Activated naive CD4-positive, alpha-beta T cell treated with anti-CD3 and anti-CD28 coated beads for 36 hours (primary cell): ENCODE measurements at regions of chr6 and their contacts with region 1.

Region 1: DNA sequence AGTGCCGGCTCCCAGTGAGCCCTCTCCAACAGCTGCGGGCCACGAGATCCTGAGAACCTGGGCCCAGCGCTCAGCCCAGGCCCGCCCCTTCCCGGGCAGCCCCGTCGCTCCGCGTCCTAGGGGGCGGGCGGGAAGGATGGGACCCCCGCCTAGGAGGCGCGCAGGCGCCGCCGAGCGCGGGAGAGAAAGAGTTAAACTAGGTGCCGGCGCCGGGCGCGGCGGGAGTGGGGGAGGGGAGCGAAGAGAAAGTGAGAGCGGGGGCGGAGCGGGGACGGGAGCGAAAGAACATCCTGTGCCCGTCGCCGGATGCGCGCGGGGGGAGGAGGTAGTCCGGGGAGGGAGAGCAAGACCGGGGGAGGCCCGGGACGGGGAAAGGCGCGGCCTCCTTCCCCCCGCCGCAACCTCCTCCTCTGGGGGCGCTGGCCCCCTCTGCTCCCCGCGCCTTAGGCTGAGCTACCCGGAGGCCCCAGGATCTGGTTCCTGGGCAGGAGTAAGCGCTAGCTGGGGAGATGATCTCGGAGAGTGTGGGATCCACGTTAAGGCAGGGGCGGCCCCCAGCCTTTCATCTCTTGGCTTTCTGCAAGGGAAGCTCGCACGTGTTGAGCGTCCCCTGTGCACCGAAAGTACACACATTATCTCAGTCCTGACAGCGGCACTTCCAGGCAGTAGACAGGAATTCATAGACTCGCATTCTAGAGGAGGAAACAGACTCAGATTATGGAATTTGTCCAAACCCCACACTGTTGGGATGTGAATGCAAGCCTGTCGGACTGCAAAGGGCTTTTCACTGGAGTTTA is 4.9 kb upstream of the ARMC12 start:
- DNase-seq: peak; percentile 98
- H3K4me3 Mint-ChIP-seq: peak overlapping the region; percentile 78
- H3K27ac Mint-ChIP-seq: peak overlapping the region; percentile 87
- H3K4me1 Mint-ChIP-seq: peaks cover 78% of the 10 kb centered on the region
- H3K27me3 Mint-ChIP-seq: no peaks in the 10 kb centered on the region

Region 2: DNA sequence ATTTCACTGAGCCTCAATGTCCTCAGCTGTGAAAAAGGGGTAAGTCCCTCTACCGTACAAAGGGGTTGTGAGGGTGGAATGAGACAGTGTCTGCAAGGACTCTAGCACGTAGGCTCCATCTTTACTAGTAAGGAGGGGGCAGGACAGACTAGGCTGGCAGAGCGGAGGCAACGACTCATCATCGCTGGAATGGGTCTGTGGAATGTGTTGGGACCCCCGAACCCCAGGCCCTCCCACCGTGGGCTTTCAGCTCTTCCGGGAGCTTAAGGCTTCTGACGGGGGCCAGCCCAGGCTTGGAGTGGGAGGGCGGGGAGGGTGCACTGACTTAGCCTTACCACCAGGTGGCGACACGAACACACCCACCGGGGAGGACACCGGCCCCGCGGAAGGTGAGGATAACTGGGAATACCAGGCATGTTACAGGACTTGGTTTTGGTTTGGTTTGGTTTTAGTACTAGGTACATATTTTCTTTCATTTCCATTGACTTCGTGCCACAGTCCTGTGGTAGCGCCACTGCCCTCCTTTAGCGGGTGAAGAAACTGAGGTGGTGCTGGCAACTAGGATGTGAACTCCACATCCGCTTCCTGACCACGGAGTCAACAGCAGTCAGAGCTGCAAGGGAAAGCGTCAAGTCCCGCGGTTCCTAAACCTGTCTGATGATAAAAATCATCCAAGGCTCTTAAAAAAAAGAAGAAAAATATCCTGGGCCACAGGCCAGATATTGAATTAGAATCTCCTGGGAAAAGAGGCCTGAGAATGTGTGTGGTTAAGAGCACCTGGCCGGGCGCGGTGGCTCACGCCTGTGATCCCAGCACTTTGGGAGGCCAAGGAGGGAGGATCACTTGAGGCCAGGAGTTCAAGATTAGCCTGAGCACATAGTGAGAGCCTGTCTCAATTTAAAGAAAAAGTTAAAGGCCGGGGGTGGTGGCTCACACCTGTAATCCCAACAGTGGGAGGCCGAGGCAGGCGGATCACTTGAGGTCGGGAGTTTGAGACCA is 209.0 kb before region 1 on chr6:
- CTCF ChIA-PET with region 1: interaction called, 117 read pairs
- intact Hi-C with region 1: loop called (anchors 1 kb)
- DNase-seq: peak; percentile 87
- H3K4me3 Mint-ChIP-seq: peak overlapping the region; percentile 63
- H3K27ac Mint-ChIP-seq: peak overlapping the region; percentile 61
- H3K4me1 Mint-ChIP-seq: peaks cover 5% of the 10 kb centered on the region
- H3K27me3 Mint-ChIP-seq: no peaks in the 10 kb centered on the region

Region 3: GRCh38 chr6:35569011-35569461 is 162.9 kb before region 1 on chr6:
- CTCF ChIA-PET with region 1: interaction called, 42 read pairs
- intact Hi-C with region 1: loop called (anchors 1 kb)
- DNase-seq: peak; percentile 68
- H3K4me3 Mint-ChIP-seq: no peak overlapping the region
- H3K27ac Mint-ChIP-seq: no peak overlapping the region
- H3K4me1 Mint-ChIP-seq: no peaks in the 10 kb centered on the region
- H3K27me3 Mint-ChIP-seq: no peaks in the 10 kb centered on the region

Region 4: DNA sequence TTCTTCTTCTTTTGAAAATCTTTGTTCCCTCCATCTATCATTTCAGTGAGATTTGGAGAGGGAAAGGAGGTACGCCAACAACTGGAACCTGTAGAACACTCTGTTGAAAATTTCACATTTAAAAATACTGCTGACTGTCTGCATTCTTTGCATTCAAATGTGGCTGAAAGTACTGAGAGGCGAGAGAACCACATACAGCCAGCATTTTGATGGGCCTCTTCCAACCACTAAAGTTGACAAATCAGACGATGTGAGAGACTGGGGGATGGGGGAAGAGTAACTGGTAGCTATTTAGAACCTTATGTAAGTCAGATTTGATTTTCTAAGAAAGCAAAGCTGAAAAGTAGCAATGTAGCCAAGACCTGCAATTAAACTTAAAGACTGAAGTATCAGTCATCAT is 120.7 kb before region 1 on chr6:
- CTCF ChIA-PET with region 1: interaction called, 13 read pairs
- intact Hi-C with region 1: no loop called
- DNase-seq: peak; percentile 65
- H3K4me3 Mint-ChIP-seq: no peak overlapping the region
- H3K27ac Mint-ChIP-seq: peak overlapping the region; percentile 62
- H3K4me1 Mint-ChIP-seq: peaks cover 85% of the 10 kb centered on the region
- H3K27me3 Mint-ChIP-seq: no peaks in the 10 kb centered on the region

Region 5: GRCh38 chr6:35642471-35643161 is 89.3 kb before region 1 on chr6:
- CTCF ChIA-PET with region 1: interaction called, 19 read pairs
- intact Hi-C with region 1: no loop called
- DNase-seq: no peak
- H3K4me3 Mint-ChIP-seq: no peak overlapping the region
- H3K27ac Mint-ChIP-seq: peak overlapping the region; percentile 48
- H3K4me1 Mint-ChIP-seq: peaks cover 74% of the 10 kb centered on the region
- H3K27me3 Mint-ChIP-seq: no peaks in the 10 kb centered on the region

Region 6: GRCh38 chr6:35688581-35689322 is 43.2 kb before region 1 on chr6 and contains the start of gene FKBP5:
- CTCF ChIA-PET with region 1: interaction called, 42 read pairs
- intact Hi-C with region 1: loop called (anchors 1 kb)
- DNase-seq: peak; percentile 92
- H3K4me3 Mint-ChIP-seq: peak within 1 kb of the TSS; percentile 97
- H3K27ac Mint-ChIP-seq: peak within 1 kb of the TSS; percentile 94
- H3K4me1 Mint-ChIP-seq: peaks cover 16% of the 10 kb centered on the region
- H3K27me3 Mint-ChIP-seq: no peaks in the 10 kb centered on the region
- total RNA-seq, gene FKBP5: 202 to 208 TPM

Region 7: DNA sequence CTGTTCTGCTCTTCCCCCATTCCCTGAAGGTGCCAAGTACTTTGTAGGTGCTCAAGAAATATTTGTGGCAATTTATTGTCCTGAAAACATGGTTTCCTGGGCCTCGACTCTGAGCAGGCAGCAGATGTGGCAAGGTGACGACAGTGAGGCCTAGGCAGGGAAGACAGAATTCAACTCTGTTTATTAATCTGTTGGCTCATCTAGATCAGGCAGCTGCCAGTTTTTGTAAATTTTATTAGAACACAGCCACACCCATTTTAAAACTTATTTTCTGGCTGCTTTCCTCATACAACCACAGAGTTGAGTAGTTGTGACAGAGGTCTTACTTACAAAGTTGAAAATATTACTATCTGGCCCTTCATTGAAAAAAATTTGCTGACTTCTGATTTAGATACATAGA is 320.2 kb after region 1 on chr6:
- CTCF ChIA-PET with region 1: no interaction called
- intact Hi-C with region 1: no loop called
- DNase-seq: no peak
- H3K4me3 Mint-ChIP-seq: no peak overlapping the region
- H3K27ac Mint-ChIP-seq: no peak overlapping the region
- H3K4me1 Mint-ChIP-seq: peaks cover 13% of the 10 kb centered on the region
- H3K27me3 Mint-ChIP-seq: no peaks in the 10 kb centered on the region

Region 8: DNA sequence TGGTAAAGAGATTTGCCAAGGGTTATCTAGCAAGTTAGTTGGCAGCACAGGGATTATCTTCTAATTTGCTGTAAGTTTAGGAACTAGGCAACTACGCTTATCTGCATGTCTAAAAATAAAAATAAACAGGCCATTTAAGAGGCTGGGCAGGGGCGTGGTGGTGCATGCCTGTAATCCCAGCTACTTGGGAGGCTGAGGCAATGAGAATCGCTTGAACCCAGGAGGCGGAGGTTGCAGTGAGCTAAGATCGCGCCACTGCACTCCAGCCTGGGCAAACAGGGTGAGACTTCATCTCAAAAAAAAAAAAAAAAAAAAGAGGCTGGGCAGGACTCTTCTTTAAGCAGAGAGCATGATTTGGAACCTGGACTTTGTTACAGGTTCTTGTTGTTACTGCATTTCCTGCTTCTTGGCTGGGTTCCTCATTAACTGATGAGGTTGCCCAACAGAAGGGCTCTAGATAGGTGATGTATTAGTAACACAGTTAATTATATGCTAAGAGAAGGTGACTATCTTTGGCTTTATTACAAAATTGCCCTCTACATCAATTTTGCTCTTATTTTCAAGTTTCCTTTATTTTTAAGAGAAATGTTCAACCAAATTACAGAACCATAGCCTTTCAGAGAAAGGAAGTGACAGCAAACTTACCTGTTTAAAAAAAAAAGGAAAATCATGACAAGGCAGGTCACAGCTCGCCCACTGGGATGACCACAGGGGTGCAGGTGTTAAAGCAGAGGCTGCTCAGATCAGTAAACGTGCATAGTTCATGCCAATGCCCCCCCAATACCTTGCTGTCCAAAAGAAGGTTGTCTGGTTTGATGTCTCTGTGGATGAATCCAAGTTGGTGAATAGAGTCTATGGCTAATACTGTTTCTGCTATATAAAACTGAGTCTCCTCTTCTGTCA is 782.9 kb after region 1 on chr6:
- CTCF ChIA-PET with region 1: no interaction called
- intact Hi-C with region 1: no loop called
- DNase-seq: no peak
- H3K4me3 Mint-ChIP-seq: no peak overlapping the region
- H3K27ac Mint-ChIP-seq: peak overlapping the region; percentile 16
- H3K4me1 Mint-ChIP-seq: peaks cover 42% of the 10 kb centered on the region
- H3K27me3 Mint-ChIP-seq: no peaks in the 10 kb centered on the region